ENCODE measurements at regions of chr9 and their contacts with region 1.

Region 1: GRCh38 chr9:125172031-125172755 is 17.4 kb downstream of the PPP6C start:
- DNase-seq: no peak
- ATAC-seq: no peak
- H3K4me3 ChIP-seq: no peak overlapping the region
- H3K4me3 Mint-ChIP-seq: peak overlapping the region in 7 of 10 donors; percentile 4 to 77 (median 52)
- H3K27ac ChIP-seq: no peak overlapping the region
- H3K27ac Mint-ChIP-seq: peak overlapping the region; percentile 32 to 89 (median 69)
- H3K4me1 ChIP-seq: peaks cover 0 to 13% of the 10 kb centered on the region in 2 donors
- H3K4me1 Mint-ChIP-seq: peaks cover 22 to 61% (median 54%) of the 10 kb centered on the region in 7 donors
- H3K27me3 ChIP-seq: no peaks in the 10 kb centered on the region
- H3K27me3 Mint-ChIP-seq: no peaks in the 10 kb centered on the region

Region 2: DNA sequence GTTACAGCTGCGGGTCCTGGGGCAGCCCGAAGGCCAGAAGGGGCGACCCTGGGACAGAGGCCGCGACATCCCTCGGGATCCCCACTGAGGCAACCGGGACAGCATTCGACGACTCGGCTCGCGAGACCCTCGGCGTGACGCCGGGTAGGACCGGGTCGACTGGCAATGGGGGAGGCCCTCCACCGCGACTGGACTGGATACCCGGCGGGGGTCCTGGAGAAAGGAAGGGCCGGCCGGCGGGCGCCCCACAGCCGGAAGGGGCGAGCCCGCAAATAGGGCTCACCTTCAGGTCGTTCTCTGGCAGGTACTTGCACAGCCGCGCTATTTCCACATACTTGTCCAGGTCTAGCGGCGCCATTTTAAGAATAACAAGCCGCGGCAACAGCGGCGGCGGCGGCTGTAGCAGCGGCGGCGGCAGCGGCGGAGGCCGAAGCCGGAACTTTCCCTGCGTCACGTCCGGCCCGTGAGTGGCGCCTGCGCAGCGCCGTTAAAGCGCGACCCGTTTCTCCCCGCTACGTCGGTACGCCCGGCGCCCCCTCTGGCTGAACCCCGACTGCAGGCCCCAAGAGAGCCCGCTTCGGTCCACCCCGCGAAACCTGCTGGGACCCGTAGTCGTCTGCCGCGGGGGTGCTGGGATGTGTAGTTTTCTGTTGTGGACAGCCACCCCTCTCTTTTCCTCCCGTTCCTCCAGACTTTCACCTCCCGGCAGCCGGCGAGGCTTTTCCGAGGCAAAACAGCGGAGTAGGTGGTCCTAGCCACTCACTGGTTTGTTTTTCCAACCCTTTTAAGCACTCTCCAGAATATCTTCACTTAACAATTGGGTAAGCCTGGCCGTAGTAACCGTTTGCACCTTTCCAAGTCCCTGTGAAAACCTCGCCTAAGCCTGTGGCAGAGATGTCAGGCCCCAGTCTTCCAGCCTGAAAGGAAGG is 17.4 kb after region 1 on chr9 and contains the start of gene PPP6C:
- CTCF ChIA-PET with region 1: no interaction called
- POLR2A ChIA-PET with region 1: interaction called, 5 read pairs
- intact Hi-C with region 1: loop called in 1 of 2 experiments (anchors 2 kb)
- DNase-seq: peak; percentile 92 to 97 (median 96)
- ATAC-seq: peak; percentile 98
- H3K4me3 ChIP-seq: peak within 1 kb of the TSS; percentile 99
- H3K4me3 Mint-ChIP-seq: peak within 1 kb of the TSS; percentile 89 to 99 (median 96)
- H3K27ac ChIP-seq: peak within 1 kb of the TSS; percentile 98
- H3K27ac Mint-ChIP-seq: peak within 1 kb of the TSS; percentile 90 to 97 (median 95)
- H3K4me1 ChIP-seq: peaks cover 35 to 51% of the 10 kb centered on the region in 2 donors
- H3K4me1 Mint-ChIP-seq: peaks cover 35 to 79% (median 57%) of the 10 kb centered on the region in 7 donors
- H3K27me3 ChIP-seq: no peaks in the 10 kb centered on the region
- H3K27me3 Mint-ChIP-seq: peaks cover 0 to 4% (median 0%) of the 10 kb centered on the region in 5 donors
- total RNA-seq, gene PPP6C: 32.9 to 54.2 (median 49.5) TPM

Region 3: DNA sequence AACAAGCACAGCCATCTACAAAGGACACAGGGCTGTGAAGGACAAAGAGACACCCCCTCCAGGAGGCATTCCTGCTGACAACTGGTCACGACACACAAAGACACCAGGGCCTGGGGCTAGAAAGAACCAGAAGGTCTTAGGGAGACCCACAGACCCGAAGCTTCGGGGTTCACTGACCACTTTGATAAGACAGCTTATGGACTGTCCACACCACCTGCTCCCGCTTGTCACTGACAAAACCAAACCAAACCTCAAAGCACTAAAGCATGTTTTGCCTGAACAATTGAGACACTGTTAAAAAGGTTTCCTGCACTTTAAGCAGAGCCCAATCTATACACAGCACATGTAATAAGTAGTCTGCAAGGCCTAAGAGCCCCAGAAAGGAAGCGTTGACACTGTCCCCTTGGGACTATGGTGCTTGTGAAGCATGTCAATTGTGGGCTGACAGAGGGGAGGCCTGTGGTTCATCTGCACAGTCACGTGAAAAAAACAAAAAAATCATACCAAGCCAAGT is 274.4 kb after region 1 on chr9:
- CTCF ChIA-PET with region 1: no interaction called
- POLR2A ChIA-PET with region 1: no interaction called
- intact Hi-C with region 1: no loop called
- DNase-seq: no peak
- ATAC-seq: peak; percentile 63
- H3K4me3 ChIP-seq: no peak overlapping the region
- H3K4me3 Mint-ChIP-seq: no peak overlapping the region
- H3K27ac ChIP-seq: no peak overlapping the region
- H3K27ac Mint-ChIP-seq: peak overlapping the region in 1 of 9 donors; percentile 51
- H3K4me1 ChIP-seq: no peaks in the 10 kb centered on the region
- H3K4me1 Mint-ChIP-seq: peaks cover 0 to 10% (median 2%) of the 10 kb centered on the region in 7 donors
- H3K27me3 ChIP-seq: no peaks in the 10 kb centered on the region
- H3K27me3 Mint-ChIP-seq: no peaks in the 10 kb centered on the region